ENCODE measurements at regions of chr13 and their contacts with region 1.

Region 1: GRCh38 chr13:30572859-30573275 is 44.9 kb upstream of the USPL1 start:
- DNase-seq: no peak
- H3K4me3 Mint-ChIP-seq: peak overlapping the region; percentile 37
- H3K27ac Mint-ChIP-seq: no peak overlapping the region
- H3K4me1 Mint-ChIP-seq: peaks cover 22% of the 10 kb centered on the region
- H3K27me3 Mint-ChIP-seq: no peaks in the 10 kb centered on the region
- CTCF ChIP-seq: no peak

Region 2: GRCh38 chr13:30465585-30466357 is 107.1 kb before region 1 on chr13 and contains the start of gene HMGB1:
- CTCF ChIA-PET with region 1: no interaction called
- intact Hi-C with region 1: loop called (anchors 5 kb)
- DNase-seq: peak; percentile 91
- H3K4me3 Mint-ChIP-seq: peak within 1 kb of the TSS; percentile 83
- H3K27ac Mint-ChIP-seq: peak within 1 kb of the TSS; percentile 99
- H3K4me1 Mint-ChIP-seq: no peaks in the 10 kb centered on the region
- H3K27me3 Mint-ChIP-seq: no peaks in the 10 kb centered on the region
- CTCF ChIP-seq: no peak
- total RNA-seq, gene HMGB1: 344 and 410 TPM in 2 replicates

Region 3: DNA sequence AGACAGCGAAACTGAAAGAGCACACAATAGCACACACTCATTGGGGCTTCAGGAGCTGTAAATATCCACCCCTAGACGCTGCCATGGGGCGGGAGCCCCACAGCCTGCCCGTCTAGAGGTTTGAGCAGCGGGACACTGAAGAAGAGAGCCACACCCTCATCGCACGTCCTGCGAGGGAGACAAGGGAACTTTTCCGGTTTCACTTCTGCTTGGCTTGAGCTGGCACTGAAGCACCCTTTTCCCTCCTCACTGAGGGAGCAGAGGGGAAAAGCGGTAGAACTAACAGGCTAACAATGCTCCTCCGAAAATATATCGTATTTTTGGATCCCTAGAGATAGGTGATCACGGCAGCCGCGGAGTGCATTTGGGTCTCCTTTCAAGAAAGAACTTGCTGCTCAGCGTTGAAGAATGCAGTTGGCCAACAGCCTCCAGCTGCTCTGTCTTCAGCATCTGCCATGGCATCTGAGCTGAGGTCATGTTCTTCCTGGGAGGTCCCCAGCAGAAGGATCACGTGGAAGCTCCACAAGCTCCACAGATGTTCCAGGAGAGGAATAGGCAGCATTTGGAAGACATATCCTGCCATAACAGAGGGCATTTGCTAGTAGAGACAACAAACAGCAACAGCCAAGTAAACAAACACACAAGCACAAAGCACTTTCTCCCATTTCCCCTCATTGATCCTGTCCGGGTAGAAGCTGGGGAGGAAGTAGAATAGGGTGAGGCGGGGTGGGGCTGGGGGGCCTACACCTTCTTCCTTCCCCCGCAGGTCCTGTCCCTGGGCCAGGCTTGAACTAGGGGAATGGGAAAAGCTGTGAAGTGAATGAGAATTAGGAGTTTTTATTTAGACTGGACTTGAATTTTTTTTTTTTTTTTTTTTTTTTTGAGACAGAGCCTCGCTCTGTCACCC is 117.7 kb after region 1 on chr13:
- CTCF ChIA-PET with region 1: no interaction called
- intact Hi-C with region 1: no loop called
- DNase-seq: peak; percentile 12
- H3K4me3 Mint-ChIP-seq: peak overlapping the region; percentile 69
- H3K27ac Mint-ChIP-seq: peak overlapping the region; percentile 61
- H3K4me1 Mint-ChIP-seq: no peaks in the 10 kb centered on the region
- H3K27me3 Mint-ChIP-seq: peaks cover 13% of the 10 kb centered on the region
- CTCF ChIP-seq: no peak